Heart left ventricle (tissue), 16 donors: ENCODE measurements at regions of chr3 and their contacts with region 1.

Region 1: DNA sequence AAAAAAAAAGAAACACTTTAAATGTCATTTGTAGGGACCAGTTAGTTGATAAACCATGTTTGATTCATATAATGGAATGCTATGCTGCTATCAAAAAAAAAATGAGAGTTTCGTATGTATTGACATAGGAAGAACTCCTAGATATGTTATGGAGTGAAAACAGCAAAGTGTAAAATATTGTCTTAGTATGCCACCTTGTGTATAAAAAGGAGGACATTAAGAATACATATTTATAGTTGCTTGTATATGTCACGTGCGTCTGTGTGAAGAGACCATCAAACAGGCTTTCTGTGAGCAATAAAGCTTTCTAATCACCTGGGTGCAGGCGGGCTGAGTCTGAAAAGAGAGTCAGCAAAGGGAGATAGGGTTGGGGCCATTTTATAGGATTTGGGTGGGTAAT is 39.5 kb downstream of the KBTBD8 start:
- DNase-seq: no peak
- ATAC-seq: peak in 1 of 4 donors; percentile 51
- H3K4me3 ChIP-seq: no peak overlapping the region
- H3K27ac ChIP-seq: no peak overlapping the region
- H3K4me1 ChIP-seq: no peaks in the 10 kb centered on the region
- H3K27me3 ChIP-seq: no peaks in the 10 kb centered on the region
- CTCF ChIP-seq: peak in 9 of 12 donors; percentile 13 to 40 (median 24)
- POLR2A ChIP-seq: no peak

Region 2: DNA sequence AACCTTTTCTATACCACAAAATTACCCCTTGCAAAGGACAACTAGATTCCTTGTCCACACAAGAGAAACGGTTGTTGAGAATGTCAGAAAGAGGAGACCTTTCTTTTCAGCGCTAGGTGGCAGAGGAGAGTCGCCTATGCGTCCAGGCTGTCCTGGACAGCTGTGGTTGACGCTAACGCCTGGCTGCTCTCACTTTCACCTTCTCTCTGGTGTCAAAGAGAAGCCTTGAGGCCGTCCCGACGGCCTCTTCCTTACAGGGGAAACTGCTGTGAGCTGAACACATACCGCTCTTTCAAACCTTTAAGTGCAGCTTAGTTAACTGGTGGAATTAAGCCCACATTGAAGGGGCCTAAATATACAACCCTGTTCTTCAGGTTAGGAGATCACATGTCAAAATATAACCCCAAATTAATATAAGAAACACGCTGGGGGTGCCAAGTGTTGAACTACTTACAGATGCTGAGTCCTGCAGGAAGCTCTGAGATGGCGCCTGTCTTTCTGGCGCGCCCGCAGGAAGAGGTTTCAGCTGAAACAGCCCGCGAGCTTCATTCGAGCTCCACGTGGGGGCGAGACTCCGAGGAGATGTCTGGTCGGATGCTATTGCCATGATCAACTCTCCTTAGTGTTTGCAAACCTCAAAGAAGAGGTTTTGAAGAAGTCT is 65.6 kb before region 1 on chr3:
- intact Hi-C with region 1: loop called (anchors 5 to 10 kb)
- DNase-seq: peak; percentile 68 to 76 (median 72)
- ATAC-seq: peak; percentile 93 to 100 (median 98)
- H3K4me3 ChIP-seq: peak overlapping the region in 10 of 12 donors; percentile 6 to 54 (median 46)
- H3K27ac ChIP-seq: peak overlapping the region in 3 of 12 donors; percentile 22 to 47 (median 30)
- H3K4me1 ChIP-seq: peaks cover 0 to 12% (median 5%) of the 10 kb centered on the region in 12 donors
- H3K27me3 ChIP-seq: peaks cover 0 to 1% (median 0%) of the 10 kb centered on the region in 9 donors
- CTCF ChIP-seq: peak; percentile 70 to 90 (median 82)
- POLR2A ChIP-seq: no peak

Region 3: GRCh38 chr3:66989860-66990665 is 47.6 kb before region 1 on chr3:
- intact Hi-C with region 1: loop called in 7 of 10 experiments (anchors 1 to 5 kb)
- DNase-seq: no peak
- ATAC-seq: no peak
- H3K4me3 ChIP-seq: peak overlapping the region in 1 of 12 donors; percentile 23
- H3K27ac ChIP-seq: no peak overlapping the region
- H3K4me1 ChIP-seq: no peaks in the 10 kb centered on the region
- H3K27me3 ChIP-seq: peaks cover 0 to 18% (median 0%) of the 10 kb centered on the region in 9 donors
- CTCF ChIP-seq: peak in 10 of 12 donors; percentile 18 to 50 (median 34)
- POLR2A ChIP-seq: no peak

Region 4: DNA sequence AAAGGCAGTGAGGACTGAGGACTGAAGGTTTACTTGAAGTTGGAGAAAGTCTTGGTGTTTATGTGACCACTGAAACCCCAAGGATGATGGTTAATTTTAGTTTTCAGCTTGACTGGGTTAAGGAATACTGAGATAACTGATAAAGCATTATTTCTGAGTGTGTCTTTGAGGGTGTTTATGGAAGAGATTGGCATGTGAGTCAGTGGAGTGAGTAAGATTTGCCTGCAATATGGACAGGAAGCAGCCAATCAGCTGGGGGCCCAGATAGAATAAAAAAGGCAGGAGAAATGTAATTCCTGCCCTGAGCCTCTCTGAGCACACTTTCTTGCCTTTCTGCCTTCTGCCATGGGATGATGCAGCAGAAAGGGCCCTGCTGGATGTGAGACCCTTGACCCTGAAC is 52.9 kb after region 1 on chr3:
- intact Hi-C with region 1: no loop called
- DNase-seq: no peak
- ATAC-seq: no peak
- H3K4me3 ChIP-seq: no peak overlapping the region
- H3K27ac ChIP-seq: no peak overlapping the region
- H3K4me1 ChIP-seq: no peaks in the 10 kb centered on the region
- H3K27me3 ChIP-seq: no peaks in the 10 kb centered on the region
- CTCF ChIP-seq: no peak
- POLR2A ChIP-seq: no peak

Region 5: GRCh38 chr3:67104388-67104787 is 66.8 kb after region 1 on chr3:
- intact Hi-C with region 1: no loop called
- DNase-seq: no peak
- ATAC-seq: no peak
- H3K4me3 ChIP-seq: no peak overlapping the region
- H3K27ac ChIP-seq: no peak overlapping the region
- H3K4me1 ChIP-seq: no peaks in the 10 kb centered on the region
- H3K27me3 ChIP-seq: no peaks in the 10 kb centered on the region
- CTCF ChIP-seq: no peak
- POLR2A ChIP-seq: no peak